Activated B cell treated with CpG ODN at 0.5 μM for 24 hours (primary cell): ENCODE measurements at regions of chr22 and their contacts with region 1.

Region 1: GRCh38 chr22:23750714-23751440 is at the start of gene ZNF70:
- DNase-seq: peak; percentile 90
- ATAC-seq: peak; percentile 58
- H3K4me3 Mint-ChIP-seq: peak within 1 kb of the TSS; percentile 87
- H3K27ac Mint-ChIP-seq: peak within 1 kb of the TSS; percentile 95
- H3K4me1 Mint-ChIP-seq: peaks cover 62% of the 10 kb centered on the region
- H3K27me3 Mint-ChIP-seq: no peaks in the 10 kb centered on the region
- CTCF ChIP-seq: no peak
- total RNA-seq, gene ZNF70: 4.0 and 4.9 TPM in 2 replicates

Region 2: DNA sequence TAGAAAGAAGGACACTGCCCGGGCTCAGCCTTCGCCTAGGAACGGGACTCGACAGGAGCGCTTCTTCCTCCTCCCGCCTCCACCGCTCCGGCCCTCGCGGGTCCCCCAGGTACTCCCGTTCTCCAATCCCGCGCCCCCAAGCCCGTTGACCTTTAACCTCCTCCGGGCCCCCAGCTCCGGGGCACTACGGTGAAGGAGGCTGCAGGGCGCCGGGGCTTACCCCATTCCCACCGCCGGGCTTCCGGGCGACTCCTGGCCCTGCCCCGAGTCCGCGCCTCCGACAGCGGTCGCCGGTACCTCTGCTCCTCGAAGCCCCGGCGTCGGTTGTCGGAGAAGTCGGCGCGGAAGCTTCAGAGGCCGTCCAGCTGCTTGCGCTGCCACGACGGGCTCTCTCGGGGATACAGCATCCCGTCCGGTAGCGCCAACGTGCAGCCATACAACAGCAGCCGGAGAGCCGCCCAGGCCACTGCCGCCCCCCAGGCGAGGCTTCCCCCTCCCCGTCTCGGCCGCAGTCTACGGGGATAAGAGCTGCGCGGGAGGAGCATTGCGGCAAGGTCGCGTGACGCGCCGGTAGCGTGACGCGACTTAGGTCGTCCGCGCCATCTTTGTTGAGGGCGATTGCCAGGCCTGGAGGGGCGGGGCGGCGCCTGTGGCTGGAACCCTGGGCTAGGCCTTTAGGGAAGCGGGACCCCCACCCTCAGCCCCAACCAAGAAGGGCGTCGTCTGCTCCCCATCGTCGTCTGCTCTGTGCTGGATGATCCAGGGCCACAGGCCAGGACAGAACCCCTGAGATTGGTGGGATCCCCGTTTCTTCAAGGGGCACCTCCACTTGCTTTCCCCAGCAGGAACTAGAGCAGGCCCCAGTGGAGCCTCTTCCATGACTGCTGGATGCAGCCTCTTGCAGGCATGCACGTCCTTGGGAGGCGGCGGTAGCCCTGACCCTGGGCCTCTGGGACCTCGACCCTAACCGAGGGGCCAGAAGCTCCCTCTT is 33.8 kb before region 1 on chr22:
- CTCF ChIA-PET with region 1: no interaction called
- POLR2A ChIA-PET with region 1: interaction called, 13 read pairs
- intact Hi-C with region 1: loop called (anchors 1 kb)
- DNase-seq: peak; percentile 81
- ATAC-seq: peak; percentile 97
- H3K4me3 Mint-ChIP-seq: peak overlapping the region; percentile 81
- H3K27ac Mint-ChIP-seq: peak overlapping the region; percentile 69
- H3K4me1 Mint-ChIP-seq: peaks cover 16% of the 10 kb centered on the region
- H3K27me3 Mint-ChIP-seq: no peaks in the 10 kb centered on the region
- CTCF ChIP-seq: no peak

Region 3: GRCh38 chr22:23786752-23787599 is 36.1 kb after region 1 on chr22 and contains the start of gene SMARCB1:
- CTCF ChIA-PET with region 1: no interaction called
- POLR2A ChIA-PET with region 1: interaction called, 18 read pairs
- intact Hi-C with region 1: loop called (anchors 1 kb)
- DNase-seq: peak; percentile 89
- ATAC-seq: peak; percentile 85
- H3K4me3 Mint-ChIP-seq: peak within 1 kb of the TSS; percentile 90
- H3K27ac Mint-ChIP-seq: peak within 1 kb of the TSS; percentile 88
- H3K4me1 Mint-ChIP-seq: peaks cover 51% of the 10 kb centered on the region
- H3K27me3 Mint-ChIP-seq: no peaks in the 10 kb centered on the region
- CTCF ChIP-seq: no peak
- total RNA-seq, gene SMARCB1: 156 and 161 TPM in 2 replicates

Region 4: GRCh38 chr22:23857606-23858483 is 107.0 kb after region 1 on chr22 and contains the start of gene SLC2A11:
- CTCF ChIA-PET with region 1: interaction called, 5 read pairs
- POLR2A ChIA-PET with region 1: interaction called, 60 read pairs
- intact Hi-C with region 1: no loop called
- DNase-seq: peak; percentile 90
- ATAC-seq: peak; percentile 94
- H3K4me3 Mint-ChIP-seq: peak within 1 kb of the TSS; percentile 91
- H3K27ac Mint-ChIP-seq: peak within 1 kb of the TSS; percentile 94
- H3K4me1 Mint-ChIP-seq: peaks cover 22% of the 10 kb centered on the region
- H3K27me3 Mint-ChIP-seq: no peaks in the 10 kb centered on the region
- CTCF ChIP-seq: no peak
- total RNA-seq, gene SLC2A11: 24.0 and 30.2 TPM in 2 replicates